GM12878 (cell line): ENCODE measurements at regions of chr1 and their contacts with region 1.

Region 1: GRCh38 chr1:44049839-44050238 is 18.6 kb upstream of the SLC6A9 start:
- DNase-seq: no peak
- ATAC-seq: no peak
- H3K4me3 ChIP-seq: no peak overlapping the region
- H3K27ac ChIP-seq: no peak overlapping the region
- H3K4me1 ChIP-seq: no peaks in the 10 kb centered on the region
- H3K27me3 ChIP-seq: no peaks in the 10 kb centered on the region
- CTCF ChIP-seq: no peak
- EP300 ChIP-seq: no peak
- POLR2A ChIP-seq: no peak
- RAD21 ChIP-seq: no peak

Region 2: DNA sequence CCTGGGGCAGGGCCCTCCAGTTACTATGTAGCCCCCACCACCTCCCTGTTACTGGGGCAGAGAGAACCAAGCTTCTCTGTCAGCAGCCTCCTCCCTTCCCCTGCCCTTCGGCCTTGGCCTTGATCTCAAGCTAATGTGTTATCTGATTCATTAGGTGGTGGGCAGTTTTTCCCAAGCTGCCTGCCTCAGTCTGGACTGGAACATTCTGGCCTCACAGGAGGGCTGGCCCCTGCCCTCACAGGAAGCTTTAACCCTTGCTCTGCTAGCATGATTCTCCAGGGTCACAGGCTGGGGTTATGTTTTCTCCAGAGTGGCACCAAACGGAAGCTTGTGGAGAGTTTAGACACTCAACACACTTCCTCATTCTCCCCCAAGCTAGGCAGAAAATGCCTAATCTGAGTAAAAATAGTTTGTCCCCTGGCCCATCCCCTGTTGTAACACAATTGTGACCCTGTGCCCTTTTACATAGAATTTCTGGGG is 18.6 kb after region 1 on chr1:
- CTCF ChIA-PET with region 1: interaction called, 8 read pairs
- POLR2A ChIA-PET with region 1: no interaction called
- RAD21 ChIA-PET with region 1: no interaction called
- SMC1A ChIA-PET with region 1: interaction called, 11 read pairs
- in situ Hi-C with region 1: no loop called
- intact Hi-C with region 1: no loop called
- DNase-seq: peak; percentile 48
- ATAC-seq: peak; percentile 73
- H3K4me3 ChIP-seq: no peak overlapping the region
- H3K27ac ChIP-seq: peak overlapping the region; percentile 41
- H3K4me1 ChIP-seq: peaks cover 16% of the 10 kb centered on the region
- H3K27me3 ChIP-seq: no peaks in the 10 kb centered on the region
- CTCF ChIP-seq: no peak
- EP300 ChIP-seq: no peak
- POLR2A ChIP-seq: no peak
- RAD21 ChIP-seq: no peak

Region 3: GRCh38 chr1:44354840-44355581 is 305.2 kb after region 1 on chr1 and contains the start of gene ERI3:
- CTCF ChIA-PET with region 1: no interaction called
- POLR2A ChIA-PET with region 1: no interaction called
- RAD21 ChIA-PET with region 1: no interaction called
- SMC1A ChIA-PET with region 1: no interaction called
- in situ Hi-C with region 1: no loop called
- intact Hi-C with region 1: no loop called
- DNase-seq: peak; percentile 89
- ATAC-seq: peak; percentile 100
- H3K4me3 ChIP-seq: peak within 1 kb of the TSS; percentile 82
- H3K27ac ChIP-seq: 0 out of 2 replicates have a peak within 1 kb of the TSS, but pooled peaks have one; percentile 8
- H3K4me1 ChIP-seq: peaks cover 2% of the 10 kb centered on the region
- H3K27me3 ChIP-seq: no peaks in the 10 kb centered on the region
- CTCF ChIP-seq: no peak
- EP300 ChIP-seq: no peak
- POLR2A ChIP-seq: peak; percentile 75
- RAD21 ChIP-seq: no peak
- polyA plus RNA-seq, gene ERI3: 20.6 to 29.0 TPM